ENCODE measurements at regions of chr11 and their contacts with region 1.

Region 1: GRCh38 chr11:95067039-95067840 is 521 bp downstream of the SRSF8 start:
- DNase-seq: peak; percentile 45 to 88 (median 71)
- ATAC-seq: peak; percentile 61
- H3K4me3 ChIP-seq: peak overlapping the region; percentile 85 to 94
- H3K4me3 Mint-ChIP-seq: peak overlapping the region; percentile 96
- H3K27ac ChIP-seq: peak overlapping the region; percentile 90 to 92
- H3K27ac Mint-ChIP-seq: peak overlapping the region; percentile 97
- H3K4me1 ChIP-seq: peaks cover 23% of the 10 kb centered on the region
- H3K4me1 Mint-ChIP-seq: peaks cover 33% of the 10 kb centered on the region
- H3K27me3 ChIP-seq: no peaks in the 10 kb centered on the region
- H3K27me3 Mint-ChIP-seq: no peaks in the 10 kb centered on the region
- CTCF ChIP-seq: peak; percentile 46

Region 2: GRCh38 chr11:94134651-94135512 is 932.4 kb before region 1 on chr11:
- CTCF ChIA-PET with region 1: no interaction called
- POLR2A ChIA-PET with region 1: no interaction called
- intact Hi-C with region 1: loop called in 1 of 2 experiments (anchors 10 kb)
- DNase-seq: peak in 1 of 9 experiments; percentile 29
- ATAC-seq: no peak
- H3K4me3 ChIP-seq: no peak overlapping the region
- H3K4me3 Mint-ChIP-seq: no peak overlapping the region
- H3K27ac ChIP-seq: no peak overlapping the region
- H3K27ac Mint-ChIP-seq: no peak overlapping the region
- H3K4me1 ChIP-seq: peaks cover 22% of the 10 kb centered on the region
- H3K4me1 Mint-ChIP-seq: peaks cover 45% of the 10 kb centered on the region
- H3K27me3 ChIP-seq: no peaks in the 10 kb centered on the region
- H3K27me3 Mint-ChIP-seq: no peaks in the 10 kb centered on the region
- CTCF ChIP-seq: no peak

Region 3: GRCh38 chr11:95084509-95084908 is 17.3 kb after region 1 on chr11:
- CTCF ChIA-PET with region 1: interaction called, 78 read pairs
- POLR2A ChIA-PET with region 1: interaction called, 200 read pairs
- intact Hi-C with region 1: loop called (anchors 1 kb)
- DNase-seq: no peak
- ATAC-seq: no peak
- H3K4me3 ChIP-seq: no peak overlapping the region
- H3K4me3 Mint-ChIP-seq: no peak overlapping the region
- H3K27ac ChIP-seq: no peak overlapping the region
- H3K27ac Mint-ChIP-seq: no peak overlapping the region
- H3K4me1 ChIP-seq: peaks cover 8% of the 10 kb centered on the region
- H3K4me1 Mint-ChIP-seq: peaks cover 14% of the 10 kb centered on the region
- H3K27me3 ChIP-seq: no peaks in the 10 kb centered on the region
- H3K27me3 Mint-ChIP-seq: no peaks in the 10 kb centered on the region
- CTCF ChIP-seq: no peak

Region 4: GRCh38 chr11:95144313-95145235 is 77.3 kb after region 1 on chr11:
- CTCF ChIA-PET with region 1: interaction called, 17 read pairs
- POLR2A ChIA-PET with region 1: interaction called, 22 read pairs
- intact Hi-C with region 1: no loop called
- DNase-seq: no peak
- ATAC-seq: no peak
- H3K4me3 ChIP-seq: no peak overlapping the region
- H3K4me3 Mint-ChIP-seq: no peak overlapping the region
- H3K27ac ChIP-seq: no peak overlapping the region
- H3K27ac Mint-ChIP-seq: no peak overlapping the region
- H3K4me1 ChIP-seq: no peaks in the 10 kb centered on the region
- H3K4me1 Mint-ChIP-seq: peaks cover 2% of the 10 kb centered on the region
- H3K27me3 ChIP-seq: no peaks in the 10 kb centered on the region
- H3K27me3 Mint-ChIP-seq: peaks cover 18% of the 10 kb centered on the region
- CTCF ChIP-seq: no peak

Region 5: DNA sequence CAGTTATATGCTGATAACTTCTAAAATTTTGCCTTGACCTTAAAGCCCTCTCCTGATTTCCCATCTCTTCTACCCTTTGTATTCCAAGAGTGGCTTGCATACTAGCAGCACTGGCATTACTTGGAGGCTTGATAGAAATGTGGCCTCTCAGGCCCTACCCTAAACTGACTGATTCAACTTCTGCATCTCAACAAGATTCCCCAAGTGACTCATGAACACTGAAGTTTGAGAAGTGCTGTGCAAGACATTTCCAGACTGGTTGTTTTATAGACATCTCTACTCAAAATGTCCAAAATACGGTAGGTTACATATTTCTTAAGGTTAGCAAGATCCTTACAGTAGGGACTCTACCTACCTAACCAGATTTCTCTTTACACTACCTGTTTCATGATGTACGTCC is 115.2 kb after region 1 on chr11:
- CTCF ChIA-PET with region 1: no interaction called
- POLR2A ChIA-PET with region 1: no interaction called
- intact Hi-C with region 1: no loop called
- DNase-seq: no peak
- ATAC-seq: no peak
- H3K4me3 ChIP-seq: no peak overlapping the region
- H3K4me3 Mint-ChIP-seq: no peak overlapping the region
- H3K27ac ChIP-seq: no peak overlapping the region
- H3K27ac Mint-ChIP-seq: no peak overlapping the region
- H3K4me1 ChIP-seq: no peaks in the 10 kb centered on the region
- H3K4me1 Mint-ChIP-seq: peaks cover 2% of the 10 kb centered on the region
- H3K27me3 ChIP-seq: no peaks in the 10 kb centered on the region
- H3K27me3 Mint-ChIP-seq: no peaks in the 10 kb centered on the region
- CTCF ChIP-seq: no peak

Region 6: DNA sequence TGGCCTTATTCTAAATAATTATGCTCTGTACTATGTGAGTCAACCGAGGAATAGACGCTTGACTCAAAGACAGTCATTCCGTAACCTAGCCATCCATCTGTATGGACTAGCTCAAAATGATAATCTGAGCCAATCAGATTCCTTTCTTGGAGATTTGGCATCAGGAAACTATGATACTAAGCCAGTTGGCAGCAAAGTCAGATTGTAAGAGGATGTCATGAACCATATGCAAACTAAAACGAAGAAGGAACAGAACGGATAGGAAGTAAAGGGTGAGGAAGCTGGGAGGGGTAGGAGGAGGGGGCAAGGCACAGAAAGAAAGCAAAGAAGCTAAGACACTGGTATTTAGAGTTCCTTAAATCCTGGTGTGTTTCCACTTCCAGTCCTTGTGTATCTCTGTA is 174.4 kb after region 1 on chr11:
- CTCF ChIA-PET with region 1: no interaction called
- POLR2A ChIA-PET with region 1: no interaction called
- intact Hi-C with region 1: no loop called
- DNase-seq: no peak
- ATAC-seq: no peak
- H3K4me3 ChIP-seq: no peak overlapping the region
- H3K4me3 Mint-ChIP-seq: no peak overlapping the region
- H3K27ac ChIP-seq: no peak overlapping the region
- H3K27ac Mint-ChIP-seq: no peak overlapping the region
- H3K4me1 ChIP-seq: no peaks in the 10 kb centered on the region
- H3K4me1 Mint-ChIP-seq: no peaks in the 10 kb centered on the region
- H3K27me3 ChIP-seq: no peaks in the 10 kb centered on the region
- H3K27me3 Mint-ChIP-seq: no peaks in the 10 kb centered on the region
- CTCF ChIP-seq: no peak

Region 7: DNA sequence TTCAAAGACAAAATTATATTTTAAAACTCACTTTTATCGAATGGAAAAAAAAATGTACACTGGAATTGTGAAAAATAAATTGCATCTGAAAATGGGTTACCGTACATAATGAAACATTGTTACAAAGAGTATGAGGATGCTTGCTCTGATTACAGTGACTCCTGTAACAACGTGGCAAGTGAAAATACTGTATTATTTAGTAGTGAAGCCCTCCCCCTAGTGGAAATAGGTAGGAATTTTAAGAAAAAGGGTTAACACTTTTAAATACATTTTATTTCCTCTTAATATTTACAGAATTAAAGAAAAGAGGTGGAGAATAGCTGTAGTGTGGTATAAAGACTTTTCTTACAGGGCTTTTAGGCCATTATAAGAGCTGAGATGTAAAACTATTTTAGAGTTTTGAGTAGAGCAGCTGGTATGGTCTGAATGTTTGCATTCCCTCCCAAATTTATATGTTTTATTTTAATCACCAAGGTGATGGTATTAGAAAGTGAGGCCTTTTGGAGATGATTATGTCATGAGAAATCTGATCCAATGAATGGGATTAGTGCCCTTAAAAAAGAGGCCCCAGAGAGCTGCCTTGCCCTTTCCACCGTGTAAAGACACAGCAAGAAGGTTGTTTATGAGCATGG is 697.1 kb after region 1 on chr11:
- CTCF ChIA-PET with region 1: interaction called, 11 read pairs
- POLR2A ChIA-PET with region 1: interaction called, 3 read pairs
- intact Hi-C with region 1: loop called (anchors 1 kb)
- DNase-seq: peak in 2 of 9 experiments; percentile 61 to 73
- ATAC-seq: peak; percentile 86
- H3K4me3 ChIP-seq: no peak overlapping the region
- H3K4me3 Mint-ChIP-seq: no peak overlapping the region
- H3K27ac ChIP-seq: no peak overlapping the region
- H3K27ac Mint-ChIP-seq: no peak overlapping the region
- H3K4me1 ChIP-seq: no peaks in the 10 kb centered on the region
- H3K4me1 Mint-ChIP-seq: no peaks in the 10 kb centered on the region
- H3K27me3 ChIP-seq: peaks cover 0 to 2% of the 10 kb centered on the region in 2 experiments
- H3K27me3 Mint-ChIP-seq: peaks cover 5% of the 10 kb centered on the region
- CTCF ChIP-seq: peak; percentile 88

Region 8: DNA sequence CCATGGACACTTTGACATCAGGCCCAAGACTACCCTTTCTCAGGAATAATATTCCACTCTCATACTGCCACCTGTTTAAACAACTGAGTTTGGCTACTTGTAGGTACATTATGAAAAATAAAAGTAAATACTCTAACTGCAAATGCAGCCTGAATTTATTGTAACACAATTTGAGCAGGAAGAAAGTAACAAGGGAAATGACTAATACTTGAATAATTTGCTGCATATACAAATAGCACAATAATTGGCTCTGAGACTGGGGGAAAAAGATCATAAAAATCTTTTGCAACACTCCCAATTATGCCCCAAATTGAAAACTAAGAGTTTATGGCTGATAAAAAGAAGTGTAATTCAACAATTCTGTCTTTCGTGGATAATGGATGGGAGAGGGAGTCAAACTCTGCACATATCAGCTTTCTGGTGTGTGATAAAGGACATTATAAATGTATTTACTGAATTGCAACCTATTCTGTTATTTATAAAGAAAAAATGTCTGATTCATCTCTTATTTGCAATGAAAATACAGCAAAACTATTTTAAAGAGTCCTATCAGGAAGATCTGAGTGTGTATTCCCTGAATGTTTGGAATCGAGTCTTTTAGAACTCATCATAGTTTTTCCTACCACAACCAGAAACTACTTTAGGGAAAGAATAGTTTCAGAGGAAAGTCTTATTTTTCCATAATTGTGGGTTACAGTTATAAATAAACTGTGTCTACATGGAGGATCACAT is 1681.6 kb after region 1 on chr11:
- CTCF ChIA-PET with region 1: no interaction called
- POLR2A ChIA-PET with region 1: no interaction called
- intact Hi-C with region 1: no loop called
- DNase-seq: no peak
- ATAC-seq: no peak
- H3K4me3 ChIP-seq: no peak overlapping the region
- H3K4me3 Mint-ChIP-seq: no peak overlapping the region
- H3K27ac ChIP-seq: no peak overlapping the region
- H3K27ac Mint-ChIP-seq: no peak overlapping the region
- H3K4me1 ChIP-seq: no peaks in the 10 kb centered on the region
- H3K4me1 Mint-ChIP-seq: no peaks in the 10 kb centered on the region
- H3K27me3 ChIP-seq: no peaks in the 10 kb centered on the region
- H3K27me3 Mint-ChIP-seq: no peaks in the 10 kb centered on the region
- CTCF ChIP-seq: no peak

Measured in CD8-positive, alpha-beta T cell (primary cell).